ENCODE measurements at regions of chr7 and their contacts with region 1.

Region 1: GRCh38 chr7:15326044-15326644 is 235.7 kb downstream of the AGMO start:
- DNase-seq: no peak
- ATAC-seq: no peak
- H3K4me3 ChIP-seq: no peak overlapping the region
- H3K27ac ChIP-seq: no peak overlapping the region
- H3K4me1 ChIP-seq: no peaks in the 10 kb centered on the region
- H3K27me3 ChIP-seq: no peaks in the 10 kb centered on the region
- CTCF ChIP-seq: peak in 1 of 4 donors; percentile 18

Region 2: GRCh38 chr7:15720849-15721471 is 394.8 kb after region 1 on chr7:
- intact Hi-C with region 1: loop called in 1 of 3 experiments (anchors 10 kb)
- DNase-seq: peak in 1 of 6 donors; percentile 16
- ATAC-seq: peak in 1 of 4 donors; percentile 30
- H3K4me3 ChIP-seq: no peak overlapping the region
- H3K27ac ChIP-seq: no peak overlapping the region
- H3K4me1 ChIP-seq: no peaks in the 10 kb centered on the region
- H3K27me3 ChIP-seq: peaks cover 0 to 7% (median 0%) of the 10 kb centered on the region in 4 donors
- CTCF ChIP-seq: peak; percentile 19 to 54 (median 44)

Measured in pancreas (tissue), 10 donors.